Activated naive CD4-positive, alpha-beta T cell treated with anti-CD3 and anti-CD28 coated beads for 36 hours (primary cell): ENCODE measurements at regions of chr17 and their contacts with region 1.

Region 1: GRCh38 chr17:54992797-54993639 is 24.5 kb downstream of the STXBP4 start:
- DNase-seq: no peak
- H3K4me3 Mint-ChIP-seq: no peak overlapping the region
- H3K27ac Mint-ChIP-seq: no peak overlapping the region
- H3K4me1 Mint-ChIP-seq: no peaks in the 10 kb centered on the region
- H3K27me3 Mint-ChIP-seq: no peaks in the 10 kb centered on the region

Region 2: GRCh38 chr17:54968262-54968987 is 24.6 kb before region 1 on chr17 and contains the starts of genes COX11 and STXBP4:
- CTCF ChIA-PET with region 1: interaction called, 14 read pairs
- intact Hi-C with region 1: no loop called
- DNase-seq: peak; percentile 96
- H3K4me3 Mint-ChIP-seq: no peak within 1 kb of the TSS
- H3K27ac Mint-ChIP-seq: no peak within 1 kb of the TSS
- H3K4me1 Mint-ChIP-seq: peaks cover 20% of the 10 kb centered on the region
- H3K27me3 Mint-ChIP-seq: no peaks in the 10 kb centered on the region
- total RNA-seq, gene COX11: 48.6 to 50.0 TPM
- total RNA-seq, gene STXBP4: 4.5 to 5.3 TPM

Region 3: DNA sequence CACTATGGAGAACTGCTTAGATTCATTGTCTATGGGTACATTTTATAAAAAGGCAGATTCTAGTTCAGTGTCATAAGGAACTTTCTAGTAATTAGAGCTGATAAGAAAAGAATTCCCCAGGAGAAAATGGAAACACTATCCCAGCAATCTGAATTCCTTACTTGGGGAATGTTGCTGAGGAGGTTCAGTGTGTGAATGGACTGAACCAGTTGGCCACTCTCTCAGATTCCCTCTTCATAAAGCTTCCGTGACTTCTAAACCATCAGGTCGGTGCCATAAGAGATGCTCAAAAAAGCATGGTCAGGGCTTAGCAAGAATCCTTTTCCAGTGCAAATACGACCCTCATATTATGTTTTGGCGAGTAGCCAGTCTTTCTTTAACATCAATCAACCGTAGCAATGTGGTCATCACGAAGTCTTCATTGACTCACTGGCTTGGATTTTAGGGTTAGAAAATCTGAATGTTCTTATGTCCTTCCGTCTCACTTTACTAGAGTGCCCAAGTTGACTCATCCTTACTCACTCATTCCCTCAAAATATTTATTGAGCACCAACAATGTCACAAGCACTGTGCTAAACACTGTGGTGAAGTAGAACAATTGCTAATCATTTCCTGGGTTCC is 169.0 kb after region 1 on chr17:
- CTCF ChIA-PET with region 1: no interaction called
- intact Hi-C with region 1: no loop called
- DNase-seq: no peak
- H3K4me3 Mint-ChIP-seq: no peak overlapping the region
- H3K27ac Mint-ChIP-seq: no peak overlapping the region
- H3K4me1 Mint-ChIP-seq: no peaks in the 10 kb centered on the region
- H3K27me3 Mint-ChIP-seq: no peaks in the 10 kb centered on the region

Region 4: GRCh38 chr17:55238179-55238930 is 245.3 kb after region 1 on chr17:
- CTCF ChIA-PET with region 1: interaction called, 3 read pairs
- intact Hi-C with region 1: loop called (anchors 5 kb)
- DNase-seq: peak; percentile 85
- H3K4me3 Mint-ChIP-seq: peak overlapping the region; percentile 77
- H3K27ac Mint-ChIP-seq: no peak overlapping the region
- H3K4me1 Mint-ChIP-seq: peaks cover 9% of the 10 kb centered on the region
- H3K27me3 Mint-ChIP-seq: peaks cover 24% of the 10 kb centered on the region

Region 5: DNA sequence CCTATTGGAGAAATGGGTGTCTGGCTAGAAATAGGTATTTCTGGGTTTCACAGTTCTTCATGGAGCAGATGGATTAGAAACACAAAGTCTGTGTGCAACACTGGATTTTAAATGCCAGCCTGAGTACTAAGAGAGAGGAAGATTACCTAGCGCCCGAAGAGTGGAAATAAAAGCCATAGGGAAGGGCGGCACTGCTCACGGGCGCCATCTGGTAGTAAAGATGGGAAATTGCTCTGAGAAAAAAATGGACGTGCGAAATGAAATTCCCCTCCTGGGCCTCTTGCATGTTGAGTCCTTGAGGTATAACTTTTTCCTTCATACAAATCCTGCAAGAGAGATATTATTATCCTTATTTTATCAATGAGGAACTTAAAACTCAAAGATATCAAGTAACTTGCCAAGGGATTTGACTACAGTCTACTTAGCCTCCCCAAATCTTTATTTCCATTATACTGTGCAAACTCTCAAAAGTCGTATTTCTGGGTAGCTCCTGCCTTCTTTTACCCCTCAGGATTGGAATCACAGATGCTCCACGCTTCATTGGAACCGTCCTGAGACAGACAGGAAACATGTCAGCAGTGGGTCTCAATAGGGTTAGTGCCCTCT is 355.8 kb after region 1 on chr17:
- CTCF ChIA-PET with region 1: interaction called, 31 read pairs
- intact Hi-C with region 1: loop called (anchors 1 kb)
- DNase-seq: peak; percentile 54
- H3K4me3 Mint-ChIP-seq: no peak overlapping the region
- H3K27ac Mint-ChIP-seq: no peak overlapping the region
- H3K4me1 Mint-ChIP-seq: peaks cover 4% of the 10 kb centered on the region
- H3K27me3 Mint-ChIP-seq: peaks cover 2% of the 10 kb centered on the region

Region 6: DNA sequence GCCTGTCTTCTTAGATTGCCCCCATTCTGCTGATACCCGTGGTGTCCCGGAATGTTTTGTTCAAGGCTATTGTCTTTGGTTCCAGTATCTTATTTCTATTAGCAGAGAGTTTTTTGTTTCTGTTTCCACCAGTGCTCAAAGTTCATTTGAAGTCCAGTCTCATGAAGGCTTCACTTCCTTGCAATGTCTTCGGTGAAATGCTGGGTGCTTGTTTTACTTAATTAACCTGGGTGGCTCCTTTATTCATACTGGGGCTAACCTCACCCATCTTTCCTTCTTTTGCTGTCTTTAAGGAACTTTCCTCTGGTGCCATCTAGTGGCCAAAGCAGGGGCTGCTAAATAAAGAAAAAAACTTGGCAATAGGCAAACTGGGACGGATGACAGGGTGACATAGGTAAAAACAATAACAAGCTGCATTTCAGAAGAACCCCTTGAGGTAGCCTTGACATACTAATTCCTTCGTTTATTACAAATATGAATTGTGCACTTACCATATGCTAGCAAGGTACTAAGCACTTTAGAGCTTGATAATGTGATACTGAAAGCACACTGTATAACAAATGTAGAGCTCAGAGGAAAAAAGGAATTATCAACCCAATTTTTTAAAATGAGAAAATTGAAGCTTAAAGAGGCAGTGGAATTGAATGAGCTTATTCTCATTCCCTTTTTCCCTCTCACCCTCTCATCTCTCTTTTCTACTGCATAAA is 521.0 kb after region 1 on chr17:
- CTCF ChIA-PET with region 1: interaction called, 5 read pairs
- intact Hi-C with region 1: loop called (anchors 1 kb)
- DNase-seq: peak; percentile 85
- H3K4me3 Mint-ChIP-seq: no peak overlapping the region
- H3K27ac Mint-ChIP-seq: no peak overlapping the region
- H3K4me1 Mint-ChIP-seq: no peaks in the 10 kb centered on the region
- H3K27me3 Mint-ChIP-seq: no peaks in the 10 kb centered on the region